CD4-positive, alpha-beta memory T cell (primary cell): ENCODE measurements at regions of chr1 and their contacts with region 1.

Region 1: DNA sequence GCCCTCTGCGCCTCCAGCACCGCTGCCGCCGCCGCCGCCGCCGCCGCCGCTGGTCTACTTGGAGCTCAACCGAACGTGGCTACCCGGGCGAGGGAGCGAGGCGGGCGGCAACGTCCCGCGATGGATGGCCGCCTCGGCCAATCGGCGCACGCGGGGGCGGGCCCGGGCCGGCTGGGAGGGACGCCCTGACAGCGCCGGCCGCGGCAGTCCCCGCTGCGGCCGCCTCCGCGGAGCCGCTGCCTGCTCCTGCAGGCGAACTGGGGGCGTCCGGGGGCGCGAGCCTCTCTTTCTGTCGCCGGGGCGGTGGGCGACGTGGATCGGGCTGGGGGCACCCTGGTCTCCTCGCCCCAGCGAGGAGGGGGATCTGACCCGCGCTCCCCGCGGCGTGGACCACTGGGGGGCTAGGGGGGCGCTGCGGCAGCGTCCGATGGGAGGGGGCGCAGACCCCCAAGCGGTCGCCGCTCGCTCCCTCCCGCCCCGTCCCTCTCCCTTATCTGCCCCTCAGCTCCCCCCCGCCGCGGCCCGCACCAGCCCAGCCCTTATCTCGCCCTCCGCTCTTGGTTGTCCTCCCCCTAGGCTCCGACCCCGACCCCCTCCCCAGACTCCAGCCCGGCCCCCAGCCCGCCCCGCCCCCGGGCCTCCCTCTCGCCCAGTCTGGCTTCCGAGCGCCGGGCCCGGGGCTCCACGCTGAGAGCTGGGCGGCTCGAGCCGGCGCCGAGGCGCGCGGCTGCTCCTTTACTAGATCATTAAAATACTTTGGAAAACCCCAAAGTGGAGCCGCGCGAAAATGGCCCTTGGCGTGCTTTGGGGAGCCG is at the start of gene SSBP3:
- DNase-seq: peak; percentile 93 to 94 (median 93)
- H3K4me3 ChIP-seq: peak within 1 kb of the TSS; percentile 45 to 91
- H3K4me3 Mint-ChIP-seq: peak within 1 kb of the TSS; percentile 95 to 99 (median 97)
- H3K27ac ChIP-seq: peak within 1 kb of the TSS; percentile 87
- H3K27ac Mint-ChIP-seq: peak within 1 kb of the TSS; percentile 88 to 99 (median 97)
- H3K4me1 ChIP-seq: peaks cover 67% of the 10 kb centered on the region
- H3K4me1 Mint-ChIP-seq: peaks cover 51 to 77% (median 62%) of the 10 kb centered on the region in 4 donors
- H3K27me3 ChIP-seq: no peaks in the 10 kb centered on the region
- H3K27me3 Mint-ChIP-seq: peaks cover 0 to 1% of the 10 kb centered on the region in 2 donors
- total RNA-seq, gene SSBP3: 67.6 to 87.6 TPM

Region 2: GRCh38 chr1:53837924-53838652 is 568.5 kb before region 1 on chr1 and contains the start of gene NDC1:
- CTCF ChIA-PET with region 1: no interaction called
- POLR2A ChIA-PET with region 1: interaction called, 3 read pairs
- intact Hi-C with region 1: loop called (anchors 2 kb)
- DNase-seq: peak; percentile 92 to 96 (median 93)
- H3K4me3 ChIP-seq: peak within 1 kb of the TSS; percentile 83 to 87
- H3K4me3 Mint-ChIP-seq: peak within 1 kb of the TSS; percentile 91 to 99 (median 98)
- H3K27ac ChIP-seq: peak within 1 kb of the TSS; percentile 95
- H3K27ac Mint-ChIP-seq: peak within 1 kb of the TSS; percentile 97 to 99 (median 98)
- H3K4me1 ChIP-seq: peaks cover 5% of the 10 kb centered on the region
- H3K4me1 Mint-ChIP-seq: peaks cover 15 to 38% (median 24%) of the 10 kb centered on the region in 4 donors
- H3K27me3 ChIP-seq: no peaks in the 10 kb centered on the region
- H3K27me3 Mint-ChIP-seq: peaks cover 0 to 2% of the 10 kb centered on the region in 2 donors
- total RNA-seq, gene NDC1: 10.9 to 11.0 TPM

Region 3: DNA sequence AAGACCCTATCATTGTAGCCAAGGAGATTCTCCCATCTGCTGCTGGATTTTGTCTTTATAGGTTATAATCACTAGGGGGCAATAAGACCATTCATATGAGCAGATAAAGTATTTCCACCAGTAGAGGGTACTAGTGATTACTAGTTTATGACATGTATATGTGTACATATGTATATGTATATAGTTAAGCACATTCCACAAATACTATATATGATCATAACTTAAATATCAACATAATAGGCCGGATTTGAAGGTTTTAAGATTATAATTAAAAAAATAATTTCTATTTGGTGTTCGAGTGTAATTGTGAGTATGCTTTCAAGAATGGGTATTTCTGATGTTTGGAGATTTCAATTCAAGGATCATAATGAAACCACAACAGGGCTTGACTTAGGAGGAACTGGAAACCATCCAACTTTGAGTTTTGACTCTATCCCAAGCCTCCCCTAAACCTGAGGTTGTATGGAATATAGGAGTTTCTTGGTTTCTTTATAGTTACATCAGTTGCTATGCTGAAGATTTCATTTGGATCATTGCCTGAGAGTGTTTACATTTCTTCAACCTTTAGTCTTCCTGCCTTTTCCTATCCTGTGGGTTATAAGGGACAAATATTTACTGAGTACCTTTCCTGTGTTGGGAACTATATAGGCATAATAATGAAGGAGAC is 336.2 kb before region 1 on chr1:
- CTCF ChIA-PET with region 1: interaction called, 3 read pairs
- POLR2A ChIA-PET with region 1: interaction called, 7 read pairs
- intact Hi-C with region 1: loop called (anchors 1 kb)
- DNase-seq: peak in 4 of 5 donors; percentile 55 to 61 (median 56)
- H3K4me3 ChIP-seq: no peak overlapping the region
- H3K4me3 Mint-ChIP-seq: peak overlapping the region in 1 of 8 donors; percentile 0
- H3K27ac ChIP-seq: no peak overlapping the region
- H3K27ac Mint-ChIP-seq: peak overlapping the region in 1 of 7 donors; percentile 2
- H3K4me1 ChIP-seq: no peaks in the 10 kb centered on the region
- H3K4me1 Mint-ChIP-seq: peaks cover 0 to 2% (median 0%) of the 10 kb centered on the region in 4 donors
- H3K27me3 ChIP-seq: no peaks in the 10 kb centered on the region
- H3K27me3 Mint-ChIP-seq: no peaks in the 10 kb centered on the region

Region 4: GRCh38 chr1:54180701-54181360 is 225.7 kb before region 1 on chr1:
- CTCF ChIA-PET with region 1: no interaction called
- POLR2A ChIA-PET with region 1: interaction called, 5 read pairs
- intact Hi-C with region 1: loop called (anchors 5 kb)
- DNase-seq: no peak
- H3K4me3 ChIP-seq: no peak overlapping the region
- H3K4me3 Mint-ChIP-seq: no peak overlapping the region
- H3K27ac ChIP-seq: no peak overlapping the region
- H3K27ac Mint-ChIP-seq: no peak overlapping the region
- H3K4me1 ChIP-seq: no peaks in the 10 kb centered on the region
- H3K4me1 Mint-ChIP-seq: peaks cover 0 to 1% (median 0%) of the 10 kb centered on the region in 4 donors
- H3K27me3 ChIP-seq: no peaks in the 10 kb centered on the region
- H3K27me3 Mint-ChIP-seq: no peaks in the 10 kb centered on the region

Region 5: GRCh38 chr1:54355931-54356679 is 50.4 kb before region 1 on chr1:
- CTCF ChIA-PET with region 1: no interaction called
- POLR2A ChIA-PET with region 1: interaction called, 8 read pairs
- intact Hi-C with region 1: loop called (anchors 5 kb)
- DNase-seq: no peak
- H3K4me3 ChIP-seq: peak overlapping the region in 1 of 2 donors; percentile 32
- H3K4me3 Mint-ChIP-seq: peak overlapping the region; percentile 80 to 91 (median 88)
- H3K27ac ChIP-seq: peak overlapping the region; percentile 47
- H3K27ac Mint-ChIP-seq: peak overlapping the region; percentile 61 to 94 (median 89)
- H3K4me1 ChIP-seq: peaks cover 58% of the 10 kb centered on the region
- H3K4me1 Mint-ChIP-seq: peaks cover 40 to 92% (median 71%) of the 10 kb centered on the region in 4 donors
- H3K27me3 ChIP-seq: no peaks in the 10 kb centered on the region
- H3K27me3 Mint-ChIP-seq: no peaks in the 10 kb centered on the region

Region 6: DNA sequence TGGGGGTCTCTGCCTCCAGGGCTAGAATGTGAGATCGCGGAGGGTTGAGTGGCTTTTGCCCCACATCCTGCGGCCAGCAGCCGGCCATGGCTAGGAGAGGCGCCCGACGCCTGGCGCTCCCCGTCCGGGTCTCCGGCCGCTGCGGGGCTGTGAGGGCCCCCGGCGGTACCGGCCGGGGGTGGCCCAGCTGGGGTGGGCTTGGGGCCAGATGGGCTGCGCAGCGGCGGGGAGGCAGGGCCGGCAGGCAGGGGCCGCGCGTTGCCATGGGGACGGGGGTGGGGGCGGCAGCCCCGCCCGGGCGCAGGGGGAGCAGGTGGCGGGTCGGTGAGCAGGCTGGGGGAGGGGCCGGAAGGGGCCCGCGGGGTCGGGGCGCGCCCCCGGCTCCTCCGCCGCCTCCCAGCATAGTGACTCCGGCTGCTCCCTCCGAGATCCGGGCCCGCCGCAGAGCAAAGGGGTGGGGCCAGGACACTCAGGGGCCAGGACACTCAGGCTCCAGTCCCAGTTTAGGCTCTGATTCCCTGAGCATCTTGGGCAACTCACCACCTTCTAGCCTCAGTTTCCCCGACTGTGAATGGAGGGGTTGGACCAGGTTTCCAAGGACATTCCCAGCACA is 68.2 kb after region 1 on chr1:
- CTCF ChIA-PET with region 1: interaction called, 4 read pairs
- POLR2A ChIA-PET with region 1: interaction called, 45 read pairs
- intact Hi-C with region 1: no loop called
- DNase-seq: peak in 2 of 5 donors; percentile 33 to 38
- H3K4me3 ChIP-seq: peak overlapping the region; percentile 22 to 57
- H3K4me3 Mint-ChIP-seq: peak overlapping the region; percentile 78 to 93 (median 84)
- H3K27ac ChIP-seq: peak overlapping the region; percentile 47
- H3K27ac Mint-ChIP-seq: peak overlapping the region; percentile 87 to 97 (median 95)
- H3K4me1 ChIP-seq: peaks cover 53% of the 10 kb centered on the region
- H3K4me1 Mint-ChIP-seq: peaks cover 34 to 58% (median 45%) of the 10 kb centered on the region in 4 donors
- H3K27me3 ChIP-seq: no peaks in the 10 kb centered on the region
- H3K27me3 Mint-ChIP-seq: peaks cover 0 to 2% of the 10 kb centered on the region in 2 donors

Region 7: DNA sequence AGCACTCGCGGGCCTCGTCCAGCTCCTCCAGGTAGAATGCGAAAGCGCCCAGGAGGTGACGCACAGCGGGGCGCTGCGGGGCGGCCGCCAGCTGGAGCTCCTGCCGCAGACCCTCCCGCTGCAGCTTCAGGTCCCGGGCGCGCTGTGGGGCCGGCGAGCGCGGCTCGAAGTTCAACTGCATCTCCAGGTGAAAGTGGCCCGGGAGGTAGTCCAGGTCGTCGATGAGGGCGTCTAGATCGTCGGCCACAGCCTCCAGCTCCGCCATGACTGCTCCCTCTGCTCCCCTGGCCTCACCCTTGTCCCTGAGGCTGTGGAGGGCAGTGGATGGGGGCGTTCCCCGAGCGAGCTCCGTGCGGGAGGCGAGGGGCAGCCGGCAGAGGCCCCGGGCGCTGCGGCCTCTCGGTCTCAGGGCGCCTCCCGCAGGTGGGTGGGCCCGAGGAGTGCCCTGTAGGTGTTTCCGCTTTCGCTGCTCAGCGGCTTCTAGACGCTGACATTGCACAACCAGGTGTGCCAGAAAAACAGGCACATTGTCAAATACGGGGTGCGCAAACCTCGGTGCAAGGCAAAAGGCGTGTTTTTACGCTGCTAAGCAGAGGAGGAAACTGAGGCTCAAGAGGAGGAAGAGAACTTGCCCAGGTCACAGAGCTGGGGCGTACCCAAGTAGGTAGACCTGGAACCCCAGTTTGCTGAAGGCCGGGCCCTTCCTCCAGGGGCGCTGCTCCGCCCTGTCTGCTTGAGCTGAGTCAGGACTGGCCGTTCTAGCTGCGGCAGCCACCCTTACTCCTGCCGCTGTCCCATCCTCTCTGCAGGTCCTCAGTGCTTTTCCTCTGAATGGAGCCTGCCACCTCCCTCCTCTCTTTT is 394.6 kb after region 1 on chr1 and contains the start of gene TTC22:
- CTCF ChIA-PET with region 1: interaction called, 3 read pairs
- POLR2A ChIA-PET with region 1: interaction called, 3 read pairs
- intact Hi-C with region 1: loop called (anchors 5 kb)
- DNase-seq: peak; percentile 65 to 77 (median 70)
- H3K4me3 ChIP-seq: peak within 1 kb of the TSS; percentile 89 to 90
- H3K4me3 Mint-ChIP-seq: peak within 1 kb of the TSS; percentile 90 to 99 (median 96)
- H3K27ac ChIP-seq: peak within 1 kb of the TSS; percentile 68
- H3K27ac Mint-ChIP-seq: peak within 1 kb of the TSS; percentile 89 to 98 (median 96)
- H3K4me1 ChIP-seq: peaks cover 46% of the 10 kb centered on the region
- H3K4me1 Mint-ChIP-seq: peaks cover 40 to 73% (median 57%) of the 10 kb centered on the region in 4 donors
- H3K27me3 ChIP-seq: no peaks in the 10 kb centered on the region
- H3K27me3 Mint-ChIP-seq: no peaks in the 10 kb centered on the region
- total RNA-seq, gene TTC22: 18.6 to 19.0 TPM